Breast epithelium (tissue), 4 donors: ENCODE measurements at regions of chr12 and their contacts with region 1.

Region 1: DNA sequence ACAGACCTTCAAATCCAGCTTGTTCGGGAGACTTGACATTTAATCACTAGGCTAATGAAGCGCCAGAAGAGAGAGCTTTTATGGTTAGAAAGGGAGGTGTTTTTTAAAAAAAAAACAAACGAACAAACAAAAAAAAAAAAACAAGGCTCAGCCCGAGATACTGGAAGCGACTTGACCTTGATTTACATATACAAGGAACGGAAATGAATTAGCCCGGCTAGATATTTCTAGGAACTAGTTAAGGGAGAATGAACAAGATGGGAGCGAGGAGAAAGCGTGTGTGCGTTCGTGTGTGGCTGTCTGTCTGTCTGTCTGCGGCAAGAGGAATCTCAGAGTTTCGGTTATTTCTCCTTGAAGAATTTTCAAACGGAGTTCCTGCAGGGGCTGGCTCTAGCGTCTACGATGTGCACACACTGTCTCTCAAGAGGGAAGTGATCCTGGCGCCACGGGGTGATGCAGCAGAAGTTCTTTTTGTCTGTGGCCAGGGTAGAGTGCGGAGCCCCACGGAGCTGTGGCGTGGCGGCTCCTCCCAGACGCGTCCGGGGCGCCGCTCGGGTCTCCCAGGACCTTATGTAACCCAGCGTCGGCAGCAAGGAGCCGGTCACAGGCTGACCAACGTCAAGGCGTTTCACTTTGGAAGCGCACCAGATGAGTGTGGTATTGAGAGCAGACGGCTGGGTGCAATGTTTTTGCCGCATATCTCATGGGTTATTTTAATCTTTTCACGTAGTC is 18.8 kb downstream of the SOCS2 start:
- DNase-seq: peak; percentile 53 to 64
- H3K4me3 ChIP-seq: peak overlapping the region; percentile 53 to 71 (median 59)
- H3K27ac ChIP-seq: peak overlapping the region; percentile 80 to 82
- H3K4me1 ChIP-seq: no peaks in the 10 kb centered on the region
- H3K27me3 ChIP-seq: no peaks in the 10 kb centered on the region
- CTCF ChIP-seq: no peak
- POLR2A ChIP-seq: no peak

Region 2: DNA sequence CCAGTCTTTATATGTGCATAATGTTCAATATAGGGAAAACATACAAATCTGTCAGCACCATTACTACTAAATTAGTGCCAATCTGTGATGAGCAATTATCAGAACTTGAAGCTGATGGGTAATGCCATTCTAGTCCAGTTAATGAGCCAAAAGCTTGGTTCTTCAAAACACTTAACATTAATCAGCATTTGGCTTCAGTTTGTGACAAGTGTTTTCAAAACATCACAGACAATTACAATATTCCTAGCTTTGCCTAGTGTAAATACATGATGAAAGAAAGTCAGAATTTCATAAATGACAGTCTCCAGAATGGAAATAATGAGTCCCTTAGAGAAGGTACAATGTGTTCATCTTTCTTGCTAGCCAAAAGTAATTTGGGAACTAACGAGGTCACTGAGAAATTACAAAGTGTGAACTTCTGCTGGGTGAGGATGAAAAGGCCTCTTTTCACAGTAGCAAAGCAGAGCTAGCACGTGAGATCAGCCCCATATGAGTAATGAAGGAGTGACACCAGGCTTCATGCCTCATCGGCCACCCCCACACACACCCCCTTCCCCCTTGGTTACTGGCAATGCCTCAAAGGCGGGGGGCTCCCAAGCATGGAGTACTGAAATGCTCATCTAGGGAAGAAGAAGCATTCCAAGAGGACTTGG is 481.6 kb before region 1 on chr12:
- intact Hi-C with region 1: loop called (anchors 5 kb)
- DNase-seq: no peak
- H3K4me3 ChIP-seq: no peak overlapping the region
- H3K27ac ChIP-seq: no peak overlapping the region
- H3K4me1 ChIP-seq: no peaks in the 10 kb centered on the region
- H3K27me3 ChIP-seq: no peaks in the 10 kb centered on the region
- CTCF ChIP-seq: no peak
- POLR2A ChIP-seq: no peak

Region 3: GRCh38 chr12:93677195-93678064 is 86.1 kb after region 1 on chr12 and contains the start of gene CRADD:
- intact Hi-C with region 1: no loop called
- DNase-seq: peak; percentile 70 to 84
- H3K4me3 ChIP-seq: peak within 1 kb of the TSS; percentile 71 to 88 (median 77)
- H3K27ac ChIP-seq: peak within 1 kb of the TSS; percentile 98 to 99
- H3K4me1 ChIP-seq: no peaks in the 10 kb centered on the region
- H3K27me3 ChIP-seq: no peaks in the 10 kb centered on the region
- CTCF ChIP-seq: no peak
- POLR2A ChIP-seq: peak; percentile 43
- total RNA-seq, gene CRADD: 24.0 to 49.8 (median 44.2) TPM

Region 4: DNA sequence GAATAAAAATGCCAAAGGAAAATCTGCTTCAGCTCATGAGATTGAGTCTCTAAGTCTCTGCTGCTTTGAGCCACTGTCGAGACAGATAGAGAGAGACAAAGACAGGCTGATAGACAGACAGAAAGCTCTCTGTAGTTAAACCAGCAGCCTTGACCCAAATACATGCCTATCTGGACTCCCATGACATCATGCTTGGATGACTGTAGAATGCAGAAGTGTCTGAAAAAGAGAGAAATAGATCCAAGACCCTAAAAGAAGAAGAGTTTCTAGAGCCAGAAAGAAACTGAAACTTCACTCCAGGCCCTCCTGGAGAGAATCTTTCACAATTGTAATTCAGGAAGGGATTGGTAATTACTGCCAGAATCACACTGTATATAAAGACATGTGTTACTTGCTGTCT is 434.5 kb after region 1 on chr12:
- intact Hi-C with region 1: no loop called
- DNase-seq: no peak
- H3K4me3 ChIP-seq: no peak overlapping the region
- H3K27ac ChIP-seq: no peak overlapping the region
- H3K4me1 ChIP-seq: no peaks in the 10 kb centered on the region
- H3K27me3 ChIP-seq: no peaks in the 10 kb centered on the region
- CTCF ChIP-seq: no peak
- POLR2A ChIP-seq: no peak

Region 5: DNA sequence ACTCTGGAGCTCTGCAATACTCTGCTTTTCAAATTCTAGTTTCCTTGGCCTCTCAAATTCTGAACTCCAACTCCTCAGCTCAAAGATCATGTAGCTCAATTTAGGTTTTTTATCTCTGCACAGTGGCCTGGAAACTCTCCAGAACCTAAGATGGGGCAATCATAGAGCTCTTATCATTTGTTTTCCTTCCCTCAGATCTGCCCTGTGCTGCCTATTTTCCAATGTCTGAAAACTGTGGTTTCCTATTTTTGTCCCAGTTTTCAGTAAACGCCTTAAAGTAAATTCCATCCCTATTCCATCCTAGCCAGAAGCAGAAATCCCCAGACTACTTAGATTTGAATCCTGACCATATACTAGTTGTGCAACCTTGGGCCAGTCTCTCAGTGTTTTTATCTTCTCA is 795.1 kb after region 1 on chr12:
- intact Hi-C with region 1: loop called (anchors 5 kb)
- DNase-seq: no peak
- H3K4me3 ChIP-seq: no peak overlapping the region
- H3K27ac ChIP-seq: no peak overlapping the region
- H3K4me1 ChIP-seq: no peaks in the 10 kb centered on the region
- H3K27me3 ChIP-seq: no peaks in the 10 kb centered on the region
- CTCF ChIP-seq: no peak
- POLR2A ChIP-seq: no peak

Region 6: DNA sequence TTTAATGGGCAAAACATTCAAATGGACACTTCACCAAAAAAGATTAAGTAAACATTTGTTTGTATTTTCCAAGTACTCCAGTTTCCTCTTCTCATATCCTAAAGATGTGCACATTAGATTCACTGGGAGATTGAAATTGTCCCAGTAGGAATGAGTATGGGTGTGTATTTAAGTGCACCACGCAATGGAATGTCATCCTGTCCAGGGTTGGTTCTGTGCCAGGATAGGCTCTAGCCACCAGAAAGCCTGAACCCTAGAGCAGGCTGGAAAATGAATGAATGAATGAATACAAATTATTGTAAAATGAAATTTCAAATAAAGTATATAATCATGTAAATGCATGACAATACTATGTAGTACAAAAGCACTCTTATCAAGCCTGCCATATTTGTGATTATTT is 854.4 kb after region 1 on chr12:
- intact Hi-C with region 1: no loop called
- DNase-seq: no peak
- H3K4me3 ChIP-seq: no peak overlapping the region
- H3K27ac ChIP-seq: no peak overlapping the region
- H3K4me1 ChIP-seq: no peaks in the 10 kb centered on the region
- H3K27me3 ChIP-seq: no peaks in the 10 kb centered on the region
- CTCF ChIP-seq: no peak
- POLR2A ChIP-seq: no peak